Calu3 (cell line): ENCODE measurements at regions of chrX and their contacts with region 1.

Region 1: GRCh38 chrX:114959729-114960128 is 57.7 kb downstream of the IL13RA2 start:
- DNase-seq: no peak
- H3K4me3 Mint-ChIP-seq: no peak overlapping the region
- H3K27ac Mint-ChIP-seq: no peak overlapping the region
- H3K4me1 Mint-ChIP-seq: peaks cover 9% of the 10 kb centered on the region
- H3K27me3 Mint-ChIP-seq: no peaks in the 10 kb centered on the region
- CTCF ChIP-seq: no peak

Region 2: GRCh38 chrX:114201622-114202021 is 758.1 kb before region 1 on chrX:
- CTCF ChIA-PET with region 1: no interaction called
- intact Hi-C with region 1: no loop called
- DNase-seq: no peak
- H3K4me3 Mint-ChIP-seq: no peak overlapping the region
- H3K27ac Mint-ChIP-seq: no peak overlapping the region
- H3K4me1 Mint-ChIP-seq: no peaks in the 10 kb centered on the region
- H3K27me3 Mint-ChIP-seq: no peaks in the 10 kb centered on the region
- CTCF ChIP-seq: no peak

Region 3: GRCh38 chrX:114500621-114501020 is 459.1 kb before region 1 on chrX:
- CTCF ChIA-PET with region 1: no interaction called
- intact Hi-C with region 1: loop called (anchors 5 kb)
- DNase-seq: no peak
- H3K4me3 Mint-ChIP-seq: no peak overlapping the region
- H3K27ac Mint-ChIP-seq: no peak overlapping the region
- H3K4me1 Mint-ChIP-seq: no peaks in the 10 kb centered on the region
- H3K27me3 Mint-ChIP-seq: no peaks in the 10 kb centered on the region
- CTCF ChIP-seq: no peak

Region 4: GRCh38 chrX:114611018-114611619 is 348.6 kb before region 1 on chrX:
- CTCF ChIA-PET with region 1: no interaction called
- intact Hi-C with region 1: loop called (anchors 1 kb)
- DNase-seq: peak; percentile 31
- H3K4me3 Mint-ChIP-seq: no peak overlapping the region
- H3K27ac Mint-ChIP-seq: no peak overlapping the region
- H3K4me1 Mint-ChIP-seq: no peaks in the 10 kb centered on the region
- H3K27me3 Mint-ChIP-seq: peaks cover 5% of the 10 kb centered on the region
- CTCF ChIP-seq: peak; percentile 15

Region 5: DNA sequence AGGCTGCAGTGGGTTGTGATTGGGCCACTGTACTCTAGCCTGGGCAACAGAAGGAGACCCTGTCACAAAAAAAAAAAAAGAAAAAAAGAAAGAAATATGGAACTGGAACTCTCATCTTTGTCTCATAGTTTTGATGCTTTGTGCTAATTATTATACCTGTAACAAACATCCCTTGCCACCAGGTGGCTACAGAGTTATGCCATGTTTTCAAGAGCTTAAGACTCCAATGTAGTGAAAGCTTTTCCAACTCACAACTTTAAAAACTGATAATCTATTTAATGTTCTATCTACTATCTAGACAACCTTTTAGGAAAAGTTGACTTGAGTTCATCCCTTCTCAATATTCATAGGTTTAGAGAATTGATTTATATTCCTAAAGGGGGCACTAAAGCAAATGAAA is 333.4 kb before region 1 on chrX:
- CTCF ChIA-PET with region 1: interaction called, 33 read pairs
- intact Hi-C with region 1: loop called (anchors 1 kb)
- DNase-seq: peak; percentile 10
- H3K4me3 Mint-ChIP-seq: no peak overlapping the region
- H3K27ac Mint-ChIP-seq: no peak overlapping the region
- H3K4me1 Mint-ChIP-seq: no peaks in the 10 kb centered on the region
- H3K27me3 Mint-ChIP-seq: no peaks in the 10 kb centered on the region
- CTCF ChIP-seq: peak; percentile 45

Region 6: GRCh38 chrX:114774691-114775090 is 185.0 kb before region 1 on chrX:
- CTCF ChIA-PET with region 1: interaction called, 3 read pairs
- intact Hi-C with region 1: loop called (anchors 2 kb)
- DNase-seq: peak; percentile 5
- H3K4me3 Mint-ChIP-seq: no peak overlapping the region
- H3K27ac Mint-ChIP-seq: no peak overlapping the region
- H3K4me1 Mint-ChIP-seq: no peaks in the 10 kb centered on the region
- H3K27me3 Mint-ChIP-seq: no peaks in the 10 kb centered on the region
- CTCF ChIP-seq: no peak